Gastrocnemius medialis (tissue), 4 donors: ENCODE measurements at regions of chr21 and their contacts with region 1.

Region 1: DNA sequence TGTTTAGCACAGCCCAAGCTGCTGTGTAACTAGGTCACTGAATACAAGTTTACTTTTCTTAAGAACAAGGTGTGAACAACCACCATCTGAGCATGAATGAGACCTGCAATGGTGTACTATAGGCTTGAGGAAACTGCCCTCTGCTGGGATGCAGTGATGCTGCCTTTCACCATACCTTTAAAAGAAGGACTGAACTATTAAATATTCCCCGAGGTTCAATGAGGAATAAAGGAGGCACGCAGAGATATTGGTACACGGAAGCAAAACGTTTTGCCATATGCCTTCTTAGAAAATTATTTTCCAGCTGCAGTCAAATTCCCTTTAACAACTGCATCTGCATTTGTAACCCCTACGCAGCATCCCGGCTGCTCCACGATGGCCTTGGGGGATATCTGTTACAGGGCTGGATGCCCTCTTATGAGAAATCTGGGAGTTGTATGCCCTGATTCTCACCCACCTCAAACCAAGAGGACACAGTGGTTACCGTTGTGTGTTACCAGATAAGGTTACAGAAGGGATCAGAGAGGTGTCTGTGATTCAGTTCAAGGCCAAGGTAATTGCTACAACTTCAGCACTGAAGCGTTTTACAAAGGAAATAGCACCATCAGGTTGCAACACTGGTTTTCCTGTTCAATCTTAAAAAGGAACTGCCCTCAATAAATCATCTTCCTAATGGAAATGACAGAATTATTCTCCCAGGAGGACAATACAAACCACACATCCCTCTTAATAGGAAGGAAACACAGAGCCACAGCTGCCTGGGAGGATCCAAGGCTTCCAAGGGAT is 470.5 kb downstream of the LTN1 start:
- DNase-seq: no peak
- ATAC-seq: peak in 1 of 2 donors; percentile 66
- H3K4me3 ChIP-seq: no peak overlapping the region
- H3K27ac ChIP-seq: peak overlapping the region in 3 of 4 donors; percentile 39 to 55 (median 45)
- H3K4me1 ChIP-seq: peaks cover 2 to 4% of the 10 kb centered on the region in 2 donors
- H3K27me3 ChIP-seq: no peaks in the 10 kb centered on the region
- CTCF ChIP-seq: peak in 1 of 5 experiments; percentile 12
- POLR2A ChIP-seq: no peak

Region 2: GRCh38 chr21:28118570-28118969 is 403.6 kb before region 1 on chr21:
- in situ Hi-C with region 1: no loop called
- intact Hi-C with region 1: no loop called
- DNase-seq: no peak
- ATAC-seq: no peak
- H3K4me3 ChIP-seq: no peak overlapping the region
- H3K27ac ChIP-seq: peak overlapping the region in 2 of 4 donors; percentile 1 to 63
- H3K4me1 ChIP-seq: peaks cover 0 to 4% of the 10 kb centered on the region in 2 donors
- H3K27me3 ChIP-seq: no peaks in the 10 kb centered on the region
- CTCF ChIP-seq: no peak
- POLR2A ChIP-seq: no peak

Region 3: GRCh38 chr21:28943631-28944030 is 421.4 kb after region 1 on chr21:
- in situ Hi-C with region 1: no loop called
- intact Hi-C with region 1: loop called (anchors 10 kb)
- DNase-seq: no peak
- ATAC-seq: no peak
- H3K4me3 ChIP-seq: no peak overlapping the region
- H3K27ac ChIP-seq: no peak overlapping the region
- H3K4me1 ChIP-seq: no peaks in the 10 kb centered on the region
- H3K27me3 ChIP-seq: no peaks in the 10 kb centered on the region
- CTCF ChIP-seq: no peak
- POLR2A ChIP-seq: no peak

Region 4: DNA sequence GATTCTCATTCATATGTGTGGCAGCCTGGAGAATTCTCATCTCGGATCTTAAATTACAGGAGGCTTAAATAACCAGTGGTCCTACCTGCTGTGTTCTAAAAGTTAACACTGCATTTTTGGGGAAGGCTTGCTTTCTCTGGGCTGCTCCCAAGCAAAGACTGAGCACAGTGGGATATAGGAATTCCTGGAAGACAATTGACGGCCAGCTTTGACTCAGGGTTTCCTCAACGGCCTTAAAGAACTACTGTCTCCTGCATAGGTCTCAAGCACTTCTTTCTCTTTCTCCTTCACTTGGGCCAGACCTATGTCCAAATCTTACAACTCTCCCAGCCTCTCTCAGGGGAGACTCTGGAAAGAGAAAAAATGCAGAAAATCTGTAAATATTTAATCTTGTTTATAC is 1904.5 kb after region 1 on chr21:
- in situ Hi-C with region 1: no loop called
- intact Hi-C with region 1: no loop called
- DNase-seq: no peak
- ATAC-seq: no peak
- H3K4me3 ChIP-seq: no peak overlapping the region
- H3K27ac ChIP-seq: no peak overlapping the region
- H3K4me1 ChIP-seq: no peaks in the 10 kb centered on the region
- H3K27me3 ChIP-seq: no peaks in the 10 kb centered on the region
- CTCF ChIP-seq: no peak
- POLR2A ChIP-seq: no peak